ENCODE measurements at regions of chr6 and their contacts with region 1.

Region 1: GRCh38 chr6:41779793-41780545 is at the start of gene FRS3:
- DNase-seq: peak; percentile 95
- H3K4me3 ChIP-seq: peak within 1 kb of the TSS; percentile 73 to 86 (median 78)
- H3K27ac ChIP-seq: no peak within 1 kb of the TSS
- H3K4me1 ChIP-seq: peaks cover 18% of the 10 kb centered on the region
- H3K27me3 ChIP-seq: no peaks in the 10 kb centered on the region
- CTCF ChIP-seq: peak; percentile 93 to 98
- POLR2A ChIP-seq: no peak
- total RNA-seq, gene FRS3: 4.4 and 5.3 TPM in 2 replicates

Region 2: DNA sequence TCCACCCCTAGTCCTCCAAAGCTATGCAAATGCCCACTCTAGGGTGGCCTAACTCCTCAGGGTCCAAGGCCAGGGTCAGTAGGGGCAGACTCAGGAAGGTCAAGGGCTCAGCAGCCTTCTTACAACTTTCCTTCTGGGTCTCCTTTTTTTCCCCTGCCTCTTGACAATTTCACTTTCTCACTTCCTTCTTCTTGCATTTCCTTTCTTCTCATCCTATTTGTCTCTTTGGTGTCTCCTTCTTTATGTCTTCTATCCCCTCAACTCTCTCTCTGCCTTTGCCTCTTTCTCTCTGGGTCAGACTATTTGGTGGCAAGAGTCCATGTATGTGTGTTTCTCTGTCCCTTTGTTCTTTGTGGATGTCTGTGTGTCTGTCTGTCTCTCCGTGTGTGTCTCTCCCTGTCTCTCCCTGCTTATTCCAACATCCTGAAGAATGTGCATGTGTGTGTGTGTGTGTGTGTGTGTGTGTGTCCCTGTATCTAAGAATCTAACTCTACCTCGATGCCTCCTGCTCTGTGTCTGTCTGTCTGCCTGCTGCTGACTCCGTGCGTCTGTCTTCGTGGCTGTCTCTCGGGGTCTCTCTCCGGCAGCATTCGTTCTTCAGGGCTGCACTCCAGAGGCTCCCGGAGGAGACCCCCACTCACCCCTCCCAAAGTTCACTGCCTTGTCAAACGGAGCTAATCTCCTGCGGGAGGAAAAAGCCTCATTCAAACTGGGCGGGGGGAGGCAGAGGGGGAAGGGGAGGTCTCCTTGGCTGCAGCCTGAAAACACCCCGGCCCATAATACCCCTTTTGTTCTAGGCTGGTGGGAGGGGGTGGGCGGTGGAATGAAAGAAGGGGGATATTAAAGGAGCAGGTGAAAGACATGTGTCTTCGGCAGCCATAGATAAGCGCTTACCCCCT is 285.5 kb before region 1 on chr6:
- CTCF ChIA-PET with region 1: no interaction called
- POLR2A ChIA-PET with region 1: no interaction called
- dilution Hi-C with region 1: no loop called
- intact Hi-C with region 1: no loop called
- DNase-seq: no peak
- H3K4me3 ChIP-seq: no peak overlapping the region
- H3K27ac ChIP-seq: no peak overlapping the region
- H3K4me1 ChIP-seq: no peaks in the 10 kb centered on the region
- H3K27me3 ChIP-seq: peaks cover 19 to 26% of the 10 kb centered on the region in 2 experiments
- CTCF ChIP-seq: no peak
- POLR2A ChIP-seq: no peak

Region 3: DNA sequence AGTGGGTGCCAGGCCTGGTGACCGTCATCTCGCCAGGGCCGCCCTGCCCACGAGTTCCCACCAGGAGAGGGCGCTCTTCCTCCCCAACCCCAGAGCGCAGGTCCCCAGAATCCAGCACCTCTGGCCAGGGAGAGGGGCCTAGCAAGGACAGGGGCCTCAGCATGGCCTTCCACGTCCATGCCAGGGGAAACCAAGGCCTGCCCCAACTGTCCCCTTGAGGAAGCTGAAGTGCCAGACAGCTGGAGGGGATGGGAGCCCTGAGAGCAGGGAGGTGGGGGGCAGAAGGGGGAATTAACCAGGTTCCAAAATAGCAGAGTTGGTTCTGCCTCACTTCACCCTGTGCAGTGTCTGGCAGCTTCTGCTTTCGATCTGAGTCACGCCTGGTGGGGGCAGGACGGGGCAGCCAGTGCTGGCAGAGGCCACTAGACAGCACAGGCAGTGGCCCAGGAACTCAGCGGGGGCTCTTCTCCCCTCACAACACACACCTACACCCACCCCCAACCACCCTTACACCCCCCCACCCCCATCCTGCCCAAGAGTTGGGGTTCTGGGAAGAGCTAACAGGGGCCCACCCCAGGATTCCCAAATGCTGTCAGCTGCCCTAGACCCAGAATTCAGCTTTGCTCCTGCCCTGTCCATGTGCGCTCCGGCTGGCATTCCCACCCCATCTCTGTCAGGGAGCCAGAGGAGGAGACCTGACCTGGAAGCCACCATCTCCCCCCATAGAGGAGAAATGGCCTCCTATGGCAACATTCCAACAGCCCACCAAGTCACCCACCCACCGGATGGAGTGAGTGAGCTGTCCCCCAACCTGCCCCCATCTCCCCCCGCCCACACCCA is 73.8 kb before region 1 on chr6:
- CTCF ChIA-PET with region 1: interaction called, 6 read pairs
- POLR2A ChIA-PET with region 1: no interaction called
- dilution Hi-C with region 1: no loop called
- intact Hi-C with region 1: loop called (anchors 1 kb)
- DNase-seq: peak; percentile 14
- H3K4me3 ChIP-seq: no peak overlapping the region
- H3K27ac ChIP-seq: no peak overlapping the region
- H3K4me1 ChIP-seq: no peaks in the 10 kb centered on the region
- H3K27me3 ChIP-seq: no peaks in the 10 kb centered on the region
- CTCF ChIP-seq: peak; percentile 47 to 57
- POLR2A ChIP-seq: no peak

Region 4: GRCh38 chr6:41735427-41736356 is 44.3 kb before region 1 on chr6 and contains the start of gene TFEB:
- CTCF ChIA-PET with region 1: interaction called, 19 read pairs
- POLR2A ChIA-PET with region 1: no interaction called
- dilution Hi-C with region 1: no loop called
- intact Hi-C with region 1: loop called (anchors 1 kb)
- DNase-seq: peak; percentile 87
- H3K4me3 ChIP-seq: peak within 1 kb of the TSS; percentile 9 to 70 (median 24)
- H3K27ac ChIP-seq: no peak within 1 kb of the TSS
- H3K4me1 ChIP-seq: peaks cover 15% of the 10 kb centered on the region
- H3K27me3 ChIP-seq: no peaks in the 10 kb centered on the region
- CTCF ChIP-seq: peak; percentile 95 to 99
- POLR2A ChIP-seq: no peak
- total RNA-seq, gene TFEB: 4.9 and 5.5 TPM in 2 replicates

Region 5: GRCh38 chr6:41936073-41936837 is 156.3 kb after region 1 on chr6:
- CTCF ChIA-PET with region 1: interaction called, 5 read pairs
- POLR2A ChIA-PET with region 1: no interaction called
- dilution Hi-C with region 1: no loop called
- intact Hi-C with region 1: loop called (anchors 1 kb)
- DNase-seq: peak; percentile 82
- H3K4me3 ChIP-seq: no peak overlapping the region
- H3K27ac ChIP-seq: no peak overlapping the region
- H3K4me1 ChIP-seq: peaks cover 27% of the 10 kb centered on the region
- H3K27me3 ChIP-seq: no peaks in the 10 kb centered on the region
- CTCF ChIP-seq: peak; percentile 84 to 86
- POLR2A ChIP-seq: no peak

Region 6: GRCh38 chr6:42009966-42010891 is 230.3 kb after region 1 on chr6:
- CTCF ChIA-PET with region 1: no interaction called
- POLR2A ChIA-PET with region 1: no interaction called
- dilution Hi-C with region 1: no loop called
- intact Hi-C with region 1: no loop called
- DNase-seq: peak; percentile 6
- H3K4me3 ChIP-seq: no peak overlapping the region
- H3K27ac ChIP-seq: no peak overlapping the region
- H3K4me1 ChIP-seq: peaks cover 5% of the 10 kb centered on the region
- H3K27me3 ChIP-seq: no peaks in the 10 kb centered on the region
- CTCF ChIP-seq: no peak
- POLR2A ChIP-seq: no peak

Region 7: GRCh38 chr6:42166444-42167141 is 386.6 kb after region 1 on chr6:
- CTCF ChIA-PET with region 1: no interaction called
- POLR2A ChIA-PET with region 1: no interaction called
- dilution Hi-C with region 1: no loop called
- intact Hi-C with region 1: loop called (anchors 1 kb)
- DNase-seq: peak; percentile 72
- H3K4me3 ChIP-seq: no peak overlapping the region
- H3K27ac ChIP-seq: no peak overlapping the region
- H3K4me1 ChIP-seq: no peaks in the 10 kb centered on the region
- H3K27me3 ChIP-seq: peaks cover 0 to 4% of the 10 kb centered on the region in 2 experiments
- CTCF ChIP-seq: peak; percentile 82 to 91
- POLR2A ChIP-seq: no peak

Measured in endothelial cell of umbilical vein (primary cell).